ENCODE measurements at regions of chr9 and their contacts with region 1.

Region 1: GRCh38 chr9:4984621-4985385 is at the start of gene JAK2:
- DNase-seq: peak; percentile 84 to 86
- ATAC-seq: peak; percentile 84 to 85
- H3K4me3 ChIP-seq: peak within 1 kb of the TSS; percentile 73 to 86 (median 79)
- H3K27ac ChIP-seq: peak within 1 kb of the TSS; percentile 93 to 98 (median 95)
- H3K4me1 ChIP-seq: peaks cover 35 to 51% of the 10 kb centered on the region in 2 donors
- H3K27me3 ChIP-seq: no peaks in the 10 kb centered on the region
- CTCF ChIP-seq: peak in 4 of 5 experiments; percentile 10 to 44 (median 38)
- POLR2A ChIP-seq: peak; percentile 76 to 85
- total RNA-seq, gene JAK2: 4.6 to 16.5 (median 9.0) TPM

Region 2: GRCh38 chr9:4277531-4277991 is 707.2 kb before region 1 on chr9:
- in situ Hi-C with region 1: no loop called
- intact Hi-C with region 1: no loop called
- DNase-seq: no peak
- ATAC-seq: peak in 1 of 2 donors; percentile 36
- H3K4me3 ChIP-seq: peak overlapping the region in 1 of 4 donors; percentile 8
- H3K27ac ChIP-seq: peak overlapping the region in 1 of 4 donors; percentile 16
- H3K4me1 ChIP-seq: peaks cover 3 to 24% of the 10 kb centered on the region in 2 donors
- H3K27me3 ChIP-seq: no peaks in the 10 kb centered on the region
- CTCF ChIP-seq: no peak
- POLR2A ChIP-seq: no peak

Region 3: GRCh38 chr9:4662108-4662988 is 322.5 kb before region 1 on chr9 and contains the start of gene PLPP6:
- in situ Hi-C with region 1: no loop called
- intact Hi-C with region 1: loop called (anchors 10 kb)
- DNase-seq: peak; percentile 78 to 84
- ATAC-seq: peak; percentile 95 to 96
- H3K4me3 ChIP-seq: peak within 1 kb of the TSS; percentile 66 to 87 (median 76)
- H3K27ac ChIP-seq: peak within 1 kb of the TSS; percentile 70 to 83 (median 77)
- H3K4me1 ChIP-seq: peaks cover 19 to 26% of the 10 kb centered on the region in 2 donors
- H3K27me3 ChIP-seq: no peaks in the 10 kb centered on the region
- CTCF ChIP-seq: peak; percentile 15 to 71 (median 57)
- POLR2A ChIP-seq: peak; percentile 16 to 51
- total RNA-seq, gene PLPP6: 2.5 to 3.1 (median 2.5) TPM

Region 4: GRCh38 chr9:4679268-4680172 is 305.3 kb before region 1 on chr9 and contains the start of gene CDC37L1:
- in situ Hi-C with region 1: no loop called
- intact Hi-C with region 1: loop called (anchors 5 kb)
- DNase-seq: peak; percentile 95 to 96
- ATAC-seq: peak; percentile 76 to 84
- H3K4me3 ChIP-seq: peak within 1 kb of the TSS; percentile 81 to 98 (median 88)
- H3K27ac ChIP-seq: peak within 1 kb of the TSS; percentile 91 to 99 (median 95)
- H3K4me1 ChIP-seq: peaks cover 40 to 44% of the 10 kb centered on the region in 2 donors
- H3K27me3 ChIP-seq: no peaks in the 10 kb centered on the region
- CTCF ChIP-seq: peak; percentile 72 to 88 (median 81)
- POLR2A ChIP-seq: peak; percentile 98 to 99
- total RNA-seq, gene CDC37L1: 91.1 to 157 (median 131) TPM

Region 5: DNA sequence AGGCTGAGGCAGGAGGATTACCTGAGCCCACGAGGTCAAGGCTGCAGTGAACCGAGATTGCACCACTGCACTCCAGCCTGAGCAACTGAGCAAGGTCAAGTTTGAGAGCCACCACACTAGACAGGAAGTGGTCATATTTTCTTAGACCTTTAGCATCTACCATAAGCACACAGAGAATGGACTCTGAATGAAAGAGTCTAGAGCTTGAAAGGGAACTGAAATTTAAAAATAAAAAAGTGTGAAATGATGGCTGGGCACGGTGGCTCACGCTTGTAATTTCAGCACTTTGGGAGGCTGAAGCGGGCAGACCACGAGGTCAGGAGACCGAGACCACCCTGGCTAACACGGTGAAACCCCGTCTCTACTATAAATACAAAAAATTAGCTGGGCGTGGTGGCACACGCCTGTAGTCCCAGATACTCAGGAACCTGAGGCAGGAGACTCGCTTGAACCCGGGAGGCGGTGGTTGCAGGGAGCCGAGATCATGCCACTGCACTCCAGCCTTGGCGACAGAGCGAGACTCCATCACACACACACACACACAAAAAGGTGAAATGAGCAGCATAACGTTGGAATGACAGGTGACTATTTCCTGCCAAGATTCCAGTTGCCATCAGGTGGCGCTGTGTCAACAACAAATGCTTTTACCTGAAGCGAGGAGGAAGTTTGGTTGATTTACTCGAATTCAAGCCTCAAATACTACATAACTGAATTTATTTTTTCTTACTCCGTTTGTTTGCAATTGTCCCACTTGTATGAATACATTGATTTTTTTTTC is 222.5 kb before region 1 on chr9:
- in situ Hi-C with region 1: loop called (anchors 5 to 10 kb)
- intact Hi-C with region 1: loop called (anchors 1 kb)
- DNase-seq: peak; percentile 42 to 65
- ATAC-seq: peak; percentile 69 to 80
- H3K4me3 ChIP-seq: peak overlapping the region; percentile 26 to 48 (median 32)
- H3K27ac ChIP-seq: peak overlapping the region; percentile 39 to 50 (median 40)
- H3K4me1 ChIP-seq: peaks cover 9 to 13% of the 10 kb centered on the region in 2 donors
- H3K27me3 ChIP-seq: no peaks in the 10 kb centered on the region
- CTCF ChIP-seq: peak; percentile 78 to 87 (median 81)
- POLR2A ChIP-seq: no peak

Region 6: DNA sequence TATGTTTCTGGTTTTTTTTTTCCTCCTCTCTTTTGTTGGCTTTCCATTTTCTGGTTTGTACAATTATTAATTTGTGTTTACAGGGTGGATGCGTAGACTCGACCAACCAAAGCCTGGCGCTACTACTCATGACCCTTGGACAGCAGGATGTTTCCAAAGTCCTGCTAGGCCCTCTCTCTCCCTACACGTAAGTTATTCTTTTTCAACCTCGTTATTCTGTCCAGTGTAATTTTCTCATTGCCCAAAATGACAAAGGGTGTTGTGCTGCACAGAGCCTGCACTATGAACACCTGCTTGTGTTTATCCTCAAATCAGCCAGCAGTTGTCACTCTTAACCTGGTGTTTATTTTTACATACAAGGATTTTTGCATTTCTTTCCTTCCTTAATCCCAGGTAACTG is 135.4 kb before region 1 on chr9:
- in situ Hi-C with region 1: no loop called
- intact Hi-C with region 1: loop called (anchors 2 kb)
- DNase-seq: no peak
- ATAC-seq: no peak
- H3K4me3 ChIP-seq: no peak overlapping the region
- H3K27ac ChIP-seq: peak overlapping the region; percentile 65 to 85 (median 72)
- H3K4me1 ChIP-seq: peaks cover 21 to 28% of the 10 kb centered on the region in 2 donors
- H3K27me3 ChIP-seq: no peaks in the 10 kb centered on the region
- CTCF ChIP-seq: no peak
- POLR2A ChIP-seq: no peak

Region 7: GRCh38 chr9:4955836-4956235 is 29.0 kb before region 1 on chr9:
- in situ Hi-C with region 1: no loop called
- intact Hi-C with region 1: no loop called
- DNase-seq: no peak
- ATAC-seq: no peak
- H3K4me3 ChIP-seq: no peak overlapping the region
- H3K27ac ChIP-seq: no peak overlapping the region
- H3K4me1 ChIP-seq: peaks cover 0 to 5% of the 10 kb centered on the region in 2 donors
- H3K27me3 ChIP-seq: no peaks in the 10 kb centered on the region
- CTCF ChIP-seq: no peak
- POLR2A ChIP-seq: no peak

Region 8: GRCh38 chr9:5608298-5609225 is 623.8 kb after region 1 on chr9:
- in situ Hi-C with region 1: loop called in 1 of 4 experiments (anchors 25 kb)
- intact Hi-C with region 1: loop called (anchors 10 kb)
- DNase-seq: peak; percentile 37 to 41
- ATAC-seq: peak; percentile 87 to 91
- H3K4me3 ChIP-seq: peak overlapping the region; percentile 46 to 56 (median 51)
- H3K27ac ChIP-seq: peak overlapping the region; percentile 77 to 86 (median 84)
- H3K4me1 ChIP-seq: peaks cover 28 to 36% of the 10 kb centered on the region in 2 donors
- H3K27me3 ChIP-seq: no peaks in the 10 kb centered on the region
- CTCF ChIP-seq: no peak
- POLR2A ChIP-seq: no peak

Measured in gastrocnemius medialis (tissue), 4 donors.